GM23248 (cell line): ENCODE measurements at regions of chr2 and their contacts with region 1.

Region 1: GRCh38 chr2:178414266-178415247 is 36.4 kb downstream of the PRKRA start:
- DNase-seq: peak; percentile 97
- H3K4me3 ChIP-seq: peak overlapping the region; percentile 81
- H3K27ac ChIP-seq: peak overlapping the region; percentile 90
- H3K4me1 ChIP-seq: peaks cover 7% of the 10 kb centered on the region
- H3K27me3 ChIP-seq: no peaks in the 10 kb centered on the region

Region 2: DNA sequence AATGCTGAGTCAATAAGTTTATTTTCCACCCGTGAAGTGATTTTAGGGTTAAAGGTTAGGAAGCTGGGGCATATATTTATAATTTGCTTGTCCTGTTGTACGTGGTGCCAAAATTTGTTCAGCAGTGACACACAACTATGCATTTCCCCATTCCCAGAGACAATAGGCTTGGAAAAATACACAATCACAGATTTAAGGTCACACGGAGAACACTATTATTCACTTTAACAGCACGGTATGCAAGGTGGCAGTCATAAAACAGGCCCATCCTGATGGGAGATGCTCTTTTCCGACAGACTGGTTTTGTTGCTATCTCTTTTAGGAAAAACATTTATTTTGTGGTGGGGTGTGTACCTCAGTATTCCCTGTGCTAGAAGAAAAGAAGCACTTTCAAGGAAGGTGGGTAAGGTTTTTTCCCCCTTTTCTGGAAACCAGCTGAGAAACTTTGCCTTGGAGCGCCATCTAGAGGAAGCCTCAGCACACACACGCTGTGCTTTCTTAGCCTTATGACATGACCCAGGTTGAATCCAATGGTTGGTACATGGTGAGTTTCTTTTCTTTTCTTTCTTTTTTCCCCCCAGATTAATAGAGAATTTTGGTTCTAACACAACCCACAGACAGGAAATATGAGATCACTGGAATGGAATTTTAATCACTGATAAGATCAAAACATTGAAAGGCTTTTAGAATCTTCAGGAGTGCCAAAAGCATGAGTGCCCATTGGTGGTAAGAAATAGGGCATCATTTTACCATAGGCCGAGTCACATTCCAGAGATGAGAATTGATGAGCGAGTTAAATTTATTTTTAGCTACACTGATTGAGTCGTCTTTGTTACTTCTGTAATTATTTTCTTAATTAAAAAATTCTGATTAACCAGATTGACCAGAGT is 689.9 kb before region 1 on chr2:
- in situ Hi-C with region 1: no loop called
- DNase-seq: peak; percentile 62
- H3K4me3 ChIP-seq: no peak overlapping the region
- H3K27ac ChIP-seq: no peak overlapping the region
- H3K4me1 ChIP-seq: no peaks in the 10 kb centered on the region
- H3K27me3 ChIP-seq: peaks cover 13% of the 10 kb centered on the region

Region 3: DNA sequence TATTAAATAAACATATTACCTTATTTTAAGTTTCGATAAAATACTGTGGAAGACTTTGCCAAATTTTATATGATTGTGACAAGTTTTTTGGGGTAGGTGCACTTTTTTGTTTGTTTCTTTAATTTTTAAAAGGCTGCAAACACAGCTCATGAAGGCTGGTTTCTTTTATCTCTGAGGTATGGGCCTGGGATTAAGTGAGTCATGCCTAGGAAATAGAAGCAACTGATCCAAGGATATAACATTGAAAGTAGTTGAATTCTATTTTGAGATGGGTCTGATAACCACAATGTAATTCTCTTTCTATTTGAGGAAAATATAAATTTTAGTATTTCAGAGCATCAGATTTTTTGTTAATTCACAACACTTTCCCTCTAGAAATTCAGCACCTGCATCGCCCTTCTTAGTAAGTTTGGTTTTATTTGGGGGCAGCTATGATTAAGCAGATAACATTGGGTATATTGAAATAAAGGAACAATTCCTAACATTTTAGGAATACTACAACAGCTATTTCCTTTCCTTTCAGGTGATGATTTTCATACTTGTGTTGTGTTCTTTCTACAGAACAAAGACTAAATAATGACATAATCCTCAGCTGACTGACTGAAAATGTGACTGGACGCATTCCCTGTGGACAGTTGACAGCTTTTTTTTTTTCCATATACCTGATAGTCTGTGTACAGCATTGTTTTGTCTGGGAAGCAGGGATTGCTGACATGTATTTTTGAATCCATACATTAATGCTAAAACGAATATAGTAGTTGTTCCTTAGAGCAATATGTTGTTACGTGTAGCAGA is 285.5 kb before region 1 on chr2:
- in situ Hi-C with region 1: loop called (anchors 10 kb)
- DNase-seq: no peak
- H3K4me3 ChIP-seq: no peak overlapping the region
- H3K27ac ChIP-seq: no peak overlapping the region
- H3K4me1 ChIP-seq: no peaks in the 10 kb centered on the region
- H3K27me3 ChIP-seq: no peaks in the 10 kb centered on the region